Gastrocnemius medialis (tissue), 4 donors: ENCODE measurements at regions of chr6 and their contacts with region 1.

Region 1: GRCh38 chr6:143127941-143128680 is 67.4 kb downstream of the AIG1 start:
- DNase-seq: no peak
- ATAC-seq: no peak
- H3K4me3 ChIP-seq: no peak overlapping the region
- H3K27ac ChIP-seq: no peak overlapping the region
- H3K4me1 ChIP-seq: no peaks in the 10 kb centered on the region
- H3K27me3 ChIP-seq: no peaks in the 10 kb centered on the region
- CTCF ChIP-seq: no peak
- POLR2A ChIP-seq: no peak

Region 2: DNA sequence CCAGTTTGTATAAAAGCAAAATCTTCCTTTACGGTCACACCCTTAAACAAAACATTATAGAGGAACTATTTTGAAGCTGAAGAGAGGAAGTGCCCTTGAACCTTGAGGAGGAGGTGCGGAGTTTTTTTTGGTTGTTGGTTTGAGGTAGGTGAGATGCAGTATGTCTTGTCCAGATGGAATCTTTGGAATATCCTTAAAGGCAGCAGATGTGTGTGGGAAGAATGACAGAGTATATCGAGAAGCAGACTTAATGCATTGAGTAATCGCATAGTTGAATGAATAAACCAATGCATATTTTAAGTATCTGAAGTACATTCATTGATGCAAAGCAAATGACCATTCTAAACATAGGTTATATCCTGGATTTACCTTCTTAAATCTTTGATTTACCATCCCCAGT is 17.5 kb before region 1 on chr6:
- in situ Hi-C with region 1: no loop called
- intact Hi-C with region 1: loop called (anchors 1 kb)
- DNase-seq: no peak
- ATAC-seq: no peak
- H3K4me3 ChIP-seq: no peak overlapping the region
- H3K27ac ChIP-seq: no peak overlapping the region
- H3K4me1 ChIP-seq: peaks cover 16 to 18% of the 10 kb centered on the region in 2 donors
- H3K27me3 ChIP-seq: no peaks in the 10 kb centered on the region
- CTCF ChIP-seq: no peak
- POLR2A ChIP-seq: no peak